ENCODE measurements at regions of chr7 and their contacts with region 1.

Region 1: GRCh38 chr7:99380032-99380822 is 5.7 kb downstream of the ARPC1B start:
- DNase-seq: peak; percentile 69
- H3K4me3 Mint-ChIP-seq: peak overlapping the region; percentile 81
- H3K27ac Mint-ChIP-seq: peak overlapping the region; percentile 97
- H3K4me1 Mint-ChIP-seq: peaks cover 61% of the 10 kb centered on the region
- H3K27me3 Mint-ChIP-seq: no peaks in the 10 kb centered on the region

Region 2: GRCh38 chr7:99325545-99326407 is 54.5 kb before region 1 on chr7 and contains the start of gene ARPC1A:
- CTCF ChIA-PET with region 1: no interaction called
- intact Hi-C with region 1: loop called (anchors 1 kb)
- DNase-seq: peak; percentile 90
- H3K4me3 Mint-ChIP-seq: peak within 1 kb of the TSS; percentile 80
- H3K27ac Mint-ChIP-seq: peak within 1 kb of the TSS; percentile 88
- H3K4me1 Mint-ChIP-seq: peaks cover 41% of the 10 kb centered on the region
- H3K27me3 Mint-ChIP-seq: no peaks in the 10 kb centered on the region
- total RNA-seq, gene ARPC1A: 41.5 to 47.7 TPM

Region 3: DNA sequence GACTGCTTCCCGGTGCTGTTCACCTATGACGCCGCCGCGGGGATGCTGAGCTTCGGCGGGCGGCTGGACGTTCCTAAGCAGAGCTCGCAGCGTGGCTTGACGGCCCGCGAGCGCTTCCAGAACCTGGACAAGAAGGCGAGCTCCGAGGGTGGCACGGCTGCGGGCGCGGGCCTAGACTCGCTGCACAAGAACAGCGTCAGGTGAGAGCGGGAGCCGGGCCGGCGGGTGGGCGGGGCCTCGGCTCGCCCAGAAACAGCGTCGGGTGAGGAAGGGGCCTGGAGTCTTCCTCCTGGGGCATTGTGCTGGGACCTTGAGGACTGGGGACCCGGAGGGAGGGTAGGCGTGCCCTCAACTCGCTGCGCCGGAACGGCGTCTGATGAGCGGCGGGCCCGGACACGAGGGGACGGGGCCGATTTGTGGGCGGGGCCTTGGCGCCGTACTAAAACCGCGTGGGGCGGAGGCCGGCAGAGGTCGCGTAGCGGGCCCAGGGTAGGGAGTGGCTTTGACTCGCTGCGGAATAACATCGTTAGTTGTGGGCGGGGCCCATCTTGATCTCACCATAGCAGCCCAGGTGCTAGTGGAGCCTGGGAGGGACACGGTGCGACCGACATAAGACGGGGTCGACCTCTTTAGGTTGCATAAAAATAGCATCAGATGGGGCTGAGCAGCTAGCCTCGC is 12.6 kb after region 1 on chr7:
- CTCF ChIA-PET with region 1: interaction called, 4 read pairs
- intact Hi-C with region 1: loop called (anchors 1 kb)
- DNase-seq: peak; percentile 79
- H3K4me3 Mint-ChIP-seq: peak overlapping the region; percentile 63
- H3K27ac Mint-ChIP-seq: peak overlapping the region; percentile 85
- H3K4me1 Mint-ChIP-seq: peaks cover 20% of the 10 kb centered on the region
- H3K27me3 Mint-ChIP-seq: no peaks in the 10 kb centered on the region

Region 4: GRCh38 chr7:99438573-99439480 is 58.6 kb after region 1 on chr7 and contains the starts of genes CPSF4 and PTCD1:
- CTCF ChIA-PET with region 1: no interaction called
- intact Hi-C with region 1: loop called (anchors 2 kb)
- DNase-seq: peak; percentile 95
- H3K4me3 Mint-ChIP-seq: peak within 1 kb of the TSS; percentile 98
- H3K27ac Mint-ChIP-seq: peak within 1 kb of the TSS; percentile 94
- H3K4me1 Mint-ChIP-seq: peaks cover 43% of the 10 kb centered on the region
- H3K27me3 Mint-ChIP-seq: no peaks in the 10 kb centered on the region
- total RNA-seq, gene CPSF4: 70.6 to 73.5 TPM
- total RNA-seq, gene PTCD1: 3.5 to 5.1 TPM